ENCODE measurements at regions of chr3 and their contacts with region 1.

Region 1: DNA sequence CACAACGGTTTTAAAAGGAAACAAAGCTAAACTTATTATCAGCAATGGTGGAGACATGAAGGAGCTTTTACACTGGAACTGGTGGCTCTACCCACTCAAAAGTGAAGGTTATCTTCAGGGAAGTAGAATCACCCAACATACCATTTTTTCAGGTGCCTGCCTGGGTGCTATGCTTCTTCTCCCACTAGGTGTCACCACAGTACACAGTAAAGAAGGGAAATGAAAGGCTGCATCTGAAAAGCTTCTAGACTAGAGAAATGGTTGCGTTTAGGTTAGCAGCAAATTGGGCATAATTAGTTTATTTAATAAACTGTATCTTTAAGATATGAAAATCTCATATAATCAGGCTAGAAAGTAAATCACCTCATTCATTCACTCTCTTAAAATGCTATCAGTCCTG is 47.0 kb upstream of the SELENOK start:
- DNase-seq: no peak
- ATAC-seq: peak in 3 of 4 donors; percentile 59 to 76 (median 73)
- H3K4me3 ChIP-seq: no peak overlapping the region
- H3K27ac ChIP-seq: no peak overlapping the region
- H3K4me1 ChIP-seq: no peaks in the 10 kb centered on the region
- H3K27me3 ChIP-seq: no peaks in the 10 kb centered on the region
- CTCF ChIP-seq: peak; percentile 84

Region 2: GRCh38 chr3:53881691-53882593 is 56.7 kb before region 1 on chr3 and contains the start of gene ACTR8:
- intact Hi-C with region 1: no loop called
- DNase-seq: peak; percentile 86 to 92
- ATAC-seq: peak; percentile 95 to 99 (median 98)
- H3K4me3 ChIP-seq: peak within 1 kb of the TSS; percentile 89
- H3K27ac ChIP-seq: peak within 1 kb of the TSS; percentile 76
- H3K4me1 ChIP-seq: peaks cover 15% of the 10 kb centered on the region
- H3K27me3 ChIP-seq: no peaks in the 10 kb centered on the region
- CTCF ChIP-seq: peak; percentile 8
- total RNA-seq, gene ACTR8: 14.1 to 24.3 (median 19.6) TPM

Region 3: DNA sequence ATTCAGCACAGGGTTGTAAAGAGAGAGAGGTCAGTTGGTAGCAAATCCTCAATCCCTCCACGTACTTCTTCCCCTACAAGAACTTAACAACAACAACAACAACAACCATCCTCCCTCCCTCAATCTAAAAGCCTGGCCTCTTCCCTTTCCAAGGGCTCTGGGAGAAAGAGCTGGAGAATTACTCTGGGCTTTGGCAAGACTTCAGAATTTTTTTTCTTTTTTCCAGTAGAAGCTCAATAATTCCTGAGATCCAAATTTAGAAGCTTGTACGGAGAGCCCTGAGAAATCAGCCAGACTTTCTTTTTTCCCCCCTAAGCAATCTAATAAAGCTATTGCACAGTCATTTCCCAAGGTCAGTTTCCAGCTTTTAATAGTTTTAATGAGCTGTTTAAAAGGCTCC is 87.9 kb after region 1 on chr3:
- intact Hi-C with region 1: no loop called
- DNase-seq: no peak
- ATAC-seq: no peak
- H3K4me3 ChIP-seq: no peak overlapping the region
- H3K27ac ChIP-seq: no peak overlapping the region
- H3K4me1 ChIP-seq: no peaks in the 10 kb centered on the region
- H3K27me3 ChIP-seq: no peaks in the 10 kb centered on the region
- CTCF ChIP-seq: no peak

Region 4: DNA sequence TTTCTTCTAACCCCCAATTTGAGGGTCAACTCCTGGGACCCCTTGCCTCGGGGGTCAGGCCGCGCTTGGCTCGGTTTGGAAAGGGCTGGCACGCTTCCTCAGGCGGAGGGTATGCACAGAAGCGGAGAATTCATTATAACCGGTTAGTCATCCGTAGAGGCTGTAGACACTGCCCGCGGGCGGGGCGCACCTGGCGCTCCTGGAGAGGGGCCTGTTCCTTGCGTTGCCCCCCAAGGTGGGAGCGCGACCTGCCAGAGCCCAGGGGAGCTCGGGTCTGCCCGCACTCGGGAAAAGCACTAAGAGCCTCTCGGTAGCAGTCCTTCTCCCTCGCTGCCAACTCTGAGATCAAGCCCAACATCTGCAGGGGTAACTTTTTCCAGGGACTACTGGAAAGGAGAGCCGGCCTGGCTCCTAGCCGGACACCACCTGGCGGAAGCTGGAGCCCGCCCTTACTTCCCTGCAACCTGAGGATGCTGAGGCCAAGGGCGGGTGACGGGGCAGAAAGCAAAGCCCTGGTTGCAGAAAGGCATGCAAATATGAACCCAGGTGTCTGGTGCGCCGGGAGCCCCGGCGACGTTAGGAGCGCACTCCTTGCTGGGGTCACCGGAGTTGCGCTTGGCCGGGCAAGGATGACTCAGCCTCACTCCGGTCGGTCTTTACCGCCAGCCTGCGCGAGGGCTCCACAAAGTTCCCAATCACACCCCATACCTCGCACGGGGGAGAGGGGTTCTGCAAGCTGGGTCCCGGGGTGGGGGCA is 182.2 kb after region 1 on chr3:
- intact Hi-C with region 1: loop called in 1 of 2 experiments (anchors 10 kb)
- DNase-seq: peak in 1 of 2 donors; percentile 67
- ATAC-seq: peak; percentile 39 to 67 (median 54)
- H3K4me3 ChIP-seq: peak overlapping the region; percentile 73
- H3K27ac ChIP-seq: no peak overlapping the region
- H3K4me1 ChIP-seq: peaks cover 9% of the 10 kb centered on the region
- H3K27me3 ChIP-seq: no peaks in the 10 kb centered on the region
- CTCF ChIP-seq: no peak

Region 5: GRCh38 chr3:54374214-54374855 is 435.7 kb after region 1 on chr3:
- intact Hi-C with region 1: loop called (anchors 5 to 10 kb)
- DNase-seq: no peak
- ATAC-seq: peak; percentile 63 to 80 (median 73)
- H3K4me3 ChIP-seq: no peak overlapping the region
- H3K27ac ChIP-seq: no peak overlapping the region
- H3K4me1 ChIP-seq: no peaks in the 10 kb centered on the region
- H3K27me3 ChIP-seq: no peaks in the 10 kb centered on the region
- CTCF ChIP-seq: peak; percentile 57